Cardiac septum (tissue), 1 donor: ENCODE measurements at regions of chr5 and their contacts with region 1.

Region 1: DNA sequence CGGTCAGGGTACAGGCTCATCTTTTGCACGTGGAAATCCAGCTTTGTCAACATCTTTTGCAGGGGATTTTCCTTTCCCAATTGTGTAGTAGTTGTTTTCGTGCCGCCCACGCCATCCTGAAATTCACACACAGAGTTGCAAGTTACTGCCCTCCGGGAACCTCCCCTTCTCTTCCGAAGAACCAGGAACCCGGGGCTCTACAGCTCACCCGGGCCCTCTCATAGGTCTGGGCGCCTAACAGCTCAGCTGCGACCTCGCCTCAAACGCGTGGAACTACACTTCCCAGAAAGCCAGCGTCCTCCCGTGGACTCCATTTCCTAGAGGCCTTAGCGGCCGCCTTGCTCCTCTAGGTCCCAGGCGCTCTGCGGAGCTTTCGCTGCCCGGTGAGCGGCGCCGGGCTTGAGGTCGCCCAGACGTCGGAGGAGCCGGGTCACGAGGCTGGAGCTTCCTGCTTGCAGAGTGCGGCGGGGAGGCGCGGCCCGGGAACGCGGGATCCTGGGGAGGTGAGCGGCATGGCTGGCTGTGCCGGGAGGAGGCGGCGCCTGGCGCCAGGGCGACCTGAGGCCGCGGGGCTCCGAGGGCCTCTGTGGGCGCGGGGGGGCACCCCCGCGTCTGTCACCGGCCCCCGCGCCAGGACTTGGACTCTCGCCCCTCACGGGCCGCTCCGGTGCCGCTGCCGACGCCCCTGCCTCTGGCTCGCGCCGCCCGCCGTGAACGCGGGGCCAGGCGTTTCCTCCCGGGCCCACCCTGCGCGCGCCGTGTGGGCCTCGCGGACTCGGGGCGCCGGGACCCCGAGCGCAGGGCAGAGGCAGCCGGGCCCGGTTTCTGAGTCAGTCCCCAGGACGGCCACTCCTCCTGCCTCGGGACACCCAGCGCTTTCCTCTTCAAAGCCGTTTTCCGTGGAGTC is at the start of gene ZNF354B:
- DNase-seq: peak; percentile 95
- total RNA-seq, gene ZNF354B: 8.2 TPM

Region 2: GRCh38 chr5:178551059-178551458 is 308.8 kb before region 1 on chr5:
- intact Hi-C with region 1: no loop called
- DNase-seq: no peak

Region 3: DNA sequence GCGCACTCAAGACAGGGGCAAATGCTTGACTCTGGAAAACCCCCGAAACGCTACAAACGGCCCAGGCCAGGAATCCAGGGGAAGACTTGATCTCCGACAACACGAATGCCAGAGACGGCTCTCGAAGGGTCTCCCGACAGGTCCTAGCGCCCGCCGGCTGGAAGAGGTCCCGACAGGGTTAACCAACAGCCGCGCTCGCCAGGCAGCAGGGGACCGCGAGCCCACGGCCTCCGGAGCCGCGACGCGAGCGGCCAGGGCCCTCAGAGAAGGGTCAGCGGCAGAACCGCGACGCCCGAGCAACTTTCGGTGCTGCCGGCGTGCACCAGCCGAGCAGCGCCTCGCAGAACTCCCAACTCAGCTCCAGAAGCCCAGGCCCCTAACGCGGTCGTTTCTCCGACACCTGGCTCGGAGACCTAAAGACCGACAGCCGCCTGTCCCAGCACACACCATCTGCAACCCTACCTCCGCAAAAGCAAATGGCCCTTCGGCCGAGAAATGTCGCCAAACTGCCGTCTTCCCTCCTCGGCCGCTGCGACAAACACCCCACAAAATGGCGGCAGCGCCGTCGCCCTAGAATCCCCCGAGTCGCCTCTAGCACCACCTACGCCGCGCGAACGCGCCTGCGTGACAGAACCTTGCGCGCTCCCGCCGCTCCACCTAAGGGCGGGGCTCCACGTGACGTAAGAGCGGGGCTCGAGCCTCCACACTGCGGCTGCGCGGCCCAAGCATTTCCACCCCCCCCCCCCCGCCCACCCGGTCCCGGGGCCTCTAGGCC is 233.2 kb before region 1 on chr5 and contains the start of gene CLK4:
- intact Hi-C with region 1: loop called (anchors 5 kb)
- DNase-seq: peak; percentile 99
- total RNA-seq, gene CLK4: 22.1 TPM

Region 4: DNA sequence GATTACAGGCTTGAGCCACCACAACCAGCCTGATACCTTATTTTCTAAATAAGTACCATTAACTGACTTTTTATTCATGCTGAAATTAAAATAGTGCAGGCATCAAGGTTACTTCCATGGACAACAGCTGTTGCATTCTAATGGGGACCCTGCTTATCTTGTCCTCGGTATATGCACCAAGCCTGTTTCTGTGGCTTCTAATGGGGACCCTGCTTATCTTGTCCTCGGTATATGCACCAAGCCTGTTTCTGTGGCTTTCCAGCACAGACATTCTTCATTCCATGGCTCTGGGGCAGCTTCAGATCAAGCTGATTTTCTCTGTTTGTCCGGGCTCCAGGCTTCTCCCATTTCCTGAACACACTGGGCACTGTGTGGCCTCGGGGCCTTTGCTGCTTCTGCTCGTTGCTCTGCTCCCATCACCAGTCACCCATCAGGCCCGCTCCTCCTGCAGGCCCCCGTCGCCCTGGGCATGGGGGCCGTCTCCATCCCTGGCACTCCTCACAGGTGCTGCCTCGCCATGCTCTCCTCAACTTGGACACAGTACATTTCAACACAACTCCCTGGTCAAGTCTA is 160.1 kb before region 1 on chr5:
- intact Hi-C with region 1: no loop called
- DNase-seq: no peak

Region 5: DNA sequence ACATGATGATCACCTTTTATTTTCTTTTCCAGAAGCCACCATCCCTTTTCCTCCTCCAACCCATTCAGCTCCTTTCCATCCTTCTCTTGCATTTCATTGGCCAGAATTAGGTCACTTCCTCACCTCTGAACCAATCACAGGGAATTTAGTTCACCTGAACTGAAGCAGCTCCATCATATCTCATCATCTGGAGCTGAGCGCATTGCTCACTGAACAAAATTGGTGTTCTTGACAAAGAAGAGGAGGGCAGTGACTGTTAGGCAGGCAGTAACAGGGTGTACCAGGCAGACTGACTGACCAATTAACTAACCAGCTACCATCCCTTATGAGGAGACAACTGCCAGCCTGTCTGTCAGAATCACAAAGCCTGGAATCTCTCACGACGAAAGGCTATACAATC is 127.6 kb before region 1 on chr5:
- intact Hi-C with region 1: loop called (anchors 1 kb)
- DNase-seq: no peak

Region 6: DNA sequence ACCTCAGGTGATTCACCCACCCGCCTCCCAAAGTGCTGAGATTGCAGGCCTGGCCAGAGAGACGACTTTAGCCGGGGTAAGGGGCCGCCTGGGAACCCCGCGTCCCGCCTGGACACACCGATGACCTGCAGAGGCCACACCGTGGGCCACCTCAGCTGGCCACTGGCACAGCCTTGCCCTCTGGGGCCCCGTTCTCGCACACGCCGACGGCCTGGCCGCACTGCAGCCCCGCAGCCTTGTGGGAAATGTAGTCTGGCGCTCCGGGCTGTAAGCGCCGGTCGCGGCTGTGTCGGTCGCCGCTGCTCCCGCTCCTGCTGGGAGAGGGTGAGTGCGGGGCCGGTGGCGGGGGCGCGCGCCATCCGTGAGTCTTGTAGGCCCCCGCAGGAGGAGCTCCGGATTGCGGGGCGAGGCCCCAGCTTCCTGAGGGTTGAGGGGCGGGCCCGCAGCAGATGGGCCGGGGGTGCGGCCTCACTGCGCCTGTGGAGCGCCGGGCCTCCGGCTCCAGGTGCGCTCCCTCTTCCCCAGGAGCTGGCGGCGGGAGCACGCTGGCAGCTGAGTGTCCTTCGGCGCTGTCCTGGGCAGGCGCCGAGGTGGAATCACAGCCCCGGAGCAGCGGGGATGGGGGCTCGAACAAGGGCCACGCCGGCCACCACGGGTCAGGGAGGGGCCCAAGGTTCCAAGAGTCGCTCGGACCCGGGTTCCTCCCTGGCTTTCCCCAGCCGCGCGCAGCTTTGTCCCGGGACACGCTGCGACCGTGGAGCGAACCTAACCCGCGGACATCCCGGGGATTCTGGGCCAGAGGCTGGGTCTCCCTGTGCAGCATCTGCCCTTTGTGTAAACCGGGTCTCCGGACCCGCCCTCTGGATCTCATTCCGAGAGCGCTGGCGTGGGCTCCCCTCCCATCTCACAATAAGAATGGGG is 36.0 kb after region 1 on chr5 and contains the start of gene ZFP2:
- intact Hi-C with region 1: loop called (anchors 2 kb)
- DNase-seq: no peak
- total RNA-seq, gene ZFP2: 1.2 TPM

Region 7: DNA sequence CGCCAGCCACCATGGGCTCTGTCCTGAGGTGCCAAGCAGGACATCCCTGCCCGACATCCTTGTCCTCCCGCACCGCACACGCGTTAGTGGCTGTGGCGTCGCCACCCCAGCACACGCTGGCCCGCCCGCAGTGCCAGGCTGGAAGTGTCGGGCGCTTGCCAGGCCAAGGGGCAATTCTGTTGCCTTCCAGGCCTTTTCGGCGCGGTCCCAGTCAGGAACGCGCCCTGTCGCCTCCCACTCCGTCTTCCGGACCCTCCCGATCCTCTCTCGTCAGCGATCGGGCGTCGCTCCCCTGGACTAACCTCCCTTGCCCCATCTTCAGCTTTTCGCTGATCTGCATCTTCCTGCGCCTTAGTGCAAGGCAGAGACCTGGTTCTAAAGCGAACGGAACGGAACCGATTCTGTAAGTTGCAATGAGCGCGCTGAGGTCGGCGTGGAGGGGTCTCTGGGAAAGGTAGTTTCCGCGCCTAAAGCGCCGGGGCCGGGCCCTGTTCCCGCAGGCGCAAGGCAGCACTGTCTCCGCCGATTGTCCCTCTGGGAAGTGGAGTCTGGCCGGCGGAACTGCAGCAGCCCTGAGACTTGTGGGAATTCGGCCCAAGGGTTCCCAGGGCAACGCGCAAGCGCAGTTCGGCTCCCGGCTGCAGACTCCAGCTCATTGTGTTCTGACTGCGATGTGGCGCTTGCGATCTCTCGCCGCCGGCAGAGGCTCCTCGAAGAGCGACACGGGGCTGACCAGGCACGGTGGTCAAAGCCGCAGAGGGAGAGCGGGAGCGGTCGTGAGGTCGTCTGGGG is 80.9 kb after region 1 on chr5 and contains the start of gene ZNF454:
- intact Hi-C with region 1: loop called (anchors 2 kb)
- DNase-seq: peak; percentile 96
- total RNA-seq, gene ZNF454: 1.7 TPM

Region 8: GRCh38 chr5:178994580-178995340 is 134.9 kb after region 1 on chr5 and contains the start of gene GRM6:
- intact Hi-C with region 1: no loop called
- DNase-seq: no peak
- total RNA-seq, gene GRM6: not detected

Region 9: GRCh38 chr5:179044765-179045164 is 184.9 kb after region 1 on chr5:
- intact Hi-C with region 1: no loop called
- DNase-seq: no peak

Region 10: GRCh38 chr5:179060116-179061008 is 200.5 kb after region 1 on chr5 and contains the start of gene ZNF354C:
- intact Hi-C with region 1: loop called (anchors 1 kb)
- DNase-seq: peak; percentile 95
- total RNA-seq, gene ZNF354C: 4.0 TPM